GM12878 (cell line): ENCODE measurements at regions of chr16 and their contacts with region 1.

Region 1: GRCh38 chr16:2838928-2839327 is 8.8 kb downstream of the ZG16B start:
- DNase-seq: no peak
- ATAC-seq: peak; percentile 97
- H3K4me3 ChIP-seq: no peak overlapping the region
- H3K27ac ChIP-seq: no peak overlapping the region
- H3K4me1 ChIP-seq: peaks cover 9% of the 10 kb centered on the region; the same call in 1 of the 2 replicates
- H3K27me3 ChIP-seq: no peaks in the 10 kb centered on the region
- CTCF ChIP-seq: peak; percentile 70 to 82 (median 80)
- EP300 ChIP-seq: no peak
- POLR2A ChIP-seq: no peak
- RAD21 ChIP-seq: peak; percentile 63

Region 2: DNA sequence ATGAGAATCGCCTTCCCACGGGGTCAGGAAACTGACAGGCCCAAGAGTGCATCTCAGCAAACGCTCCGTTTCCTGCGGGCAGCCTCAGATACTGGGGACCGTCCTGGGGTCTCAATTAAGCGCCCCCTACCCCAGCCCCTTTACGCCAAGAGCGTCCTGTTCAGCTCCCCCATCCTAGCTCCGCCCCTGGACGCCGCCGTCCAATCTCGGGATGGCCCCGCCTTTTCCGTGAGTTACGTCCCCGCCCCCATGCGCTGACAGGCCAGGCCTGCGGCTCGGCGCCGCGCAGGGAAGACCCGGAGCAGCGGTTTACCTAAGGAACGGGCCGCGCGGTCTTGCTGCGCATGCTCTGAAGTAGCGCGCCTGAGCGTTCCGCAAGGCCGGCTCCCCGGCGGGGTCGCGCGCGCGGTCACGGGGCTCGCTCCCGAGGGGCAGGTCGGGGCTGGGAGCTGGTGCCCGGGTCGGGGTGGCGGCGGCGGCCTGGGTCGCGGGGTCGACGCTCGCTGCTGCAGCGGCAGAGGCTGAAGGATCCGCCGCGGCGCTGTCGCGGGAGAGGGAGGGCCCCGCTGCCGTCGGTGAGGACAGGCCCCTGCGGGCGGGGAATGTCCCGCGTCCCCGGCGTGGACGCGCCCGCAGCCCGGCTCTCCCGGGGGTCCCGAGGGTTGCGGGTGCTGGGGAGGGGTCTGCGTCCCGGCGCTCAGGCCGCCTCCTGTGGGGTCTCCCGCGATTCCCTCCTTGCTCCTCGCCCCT is 72.8 kb after region 1 on chr16 and contains the start of gene FLYWCH1:
- CTCF ChIA-PET with region 1: interaction called, 10 read pairs
- POLR2A ChIA-PET with region 1: no interaction called
- RAD21 ChIA-PET with region 1: no interaction called
- SMC1A ChIA-PET with region 1: interaction called, 3 read pairs
- in situ Hi-C with region 1: no loop called
- intact Hi-C with region 1: no loop called
- DNase-seq: peak; percentile 88
- ATAC-seq: peak; percentile 98
- H3K4me3 ChIP-seq: peak within 1 kb of the TSS; percentile 97
- H3K27ac ChIP-seq: peak within 1 kb of the TSS; percentile 54
- H3K4me1 ChIP-seq: peaks cover 3% of the 10 kb centered on the region; the same call in 1 of the 2 replicates
- H3K27me3 ChIP-seq: no peaks in the 10 kb centered on the region
- CTCF ChIP-seq: no peak
- EP300 ChIP-seq: no peak
- POLR2A ChIP-seq: peak; percentile 86
- RAD21 ChIP-seq: no peak
- polyA plus RNA-seq, gene FLYWCH1: 0.47 to 0.60 TPM

Region 3: DNA sequence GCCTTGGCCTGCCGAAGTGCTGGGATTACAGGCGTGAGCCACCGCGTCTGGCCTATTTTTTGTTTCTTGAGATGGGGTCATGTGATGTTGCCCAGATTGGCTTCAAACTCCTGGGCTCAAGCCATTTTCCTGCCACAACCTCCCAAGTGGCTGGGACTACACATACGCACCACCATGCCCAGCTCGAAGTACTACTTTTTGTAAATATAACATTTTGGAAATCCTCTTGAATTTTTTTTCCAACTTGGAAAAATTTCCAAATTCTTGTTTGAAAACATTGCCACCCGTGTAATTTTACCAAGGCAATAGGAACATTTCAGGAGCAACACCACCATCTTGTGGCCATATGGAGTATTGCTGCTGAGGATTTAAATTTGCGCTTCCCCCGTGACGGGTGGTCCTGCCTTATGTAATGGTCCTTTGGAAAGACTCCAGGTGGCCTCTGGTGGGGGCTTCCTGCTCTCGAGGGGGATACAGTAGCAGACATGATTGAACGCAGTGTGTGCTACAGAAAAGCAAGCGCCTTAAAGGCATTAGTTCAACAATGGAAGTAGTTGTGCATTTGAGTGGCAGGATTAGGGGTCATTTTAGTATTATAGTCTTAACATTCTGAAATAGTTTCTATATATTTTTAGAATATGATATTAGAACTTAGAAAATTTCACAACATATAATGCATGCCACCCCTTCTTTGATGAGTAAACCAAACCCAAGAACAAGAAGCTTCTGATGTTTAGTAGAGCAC is 80.8 kb after region 1 on chr16:
- CTCF ChIA-PET with region 1: interaction called, 10 read pairs
- POLR2A ChIA-PET with region 1: no interaction called
- RAD21 ChIA-PET with region 1: no interaction called
- SMC1A ChIA-PET with region 1: no interaction called
- in situ Hi-C with region 1: no loop called
- intact Hi-C with region 1: no loop called
- DNase-seq: no peak
- ATAC-seq: peak; percentile 70
- H3K4me3 ChIP-seq: no peak overlapping the region
- H3K27ac ChIP-seq: no peak overlapping the region
- H3K4me1 ChIP-seq: no peaks in the 10 kb centered on the region
- H3K27me3 ChIP-seq: no peaks in the 10 kb centered on the region
- CTCF ChIP-seq: peak; percentile 75 to 93 (median 91)
- EP300 ChIP-seq: no peak
- POLR2A ChIP-seq: no peak
- RAD21 ChIP-seq: peak; percentile 78